ENCODE measurements at regions of chr16 and their contacts with region 1.

Region 1: DNA sequence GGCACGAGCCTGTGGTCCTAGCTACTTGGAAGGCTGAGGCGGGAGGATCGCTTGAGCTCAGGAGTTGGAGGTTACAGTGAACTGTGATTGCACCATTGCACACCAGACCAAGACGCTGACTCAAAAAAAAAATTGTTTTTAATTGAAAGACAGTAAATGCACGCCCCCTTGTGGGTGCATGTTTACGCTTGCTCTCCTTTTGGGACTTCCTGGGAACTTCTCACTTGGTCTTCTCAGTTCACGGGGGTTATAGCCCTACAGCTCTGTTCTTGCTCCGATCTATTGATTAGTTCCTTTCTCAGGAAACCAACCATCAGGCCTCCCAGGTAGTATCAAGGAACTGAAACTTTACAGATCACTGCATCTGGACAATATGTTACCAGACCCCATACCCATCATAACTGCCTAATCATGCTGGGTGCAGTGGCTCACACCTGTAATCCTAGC is 14.2 kb upstream of the RIPOR1 start:
- DNase-seq: peak; percentile 81 to 87
- ATAC-seq: peak in 3 of 4 donors; percentile 65 to 81 (median 74)
- H3K4me3 ChIP-seq: no peak overlapping the region
- H3K27ac ChIP-seq: no peak overlapping the region
- H3K4me1 ChIP-seq: no peaks in the 10 kb centered on the region
- H3K27me3 ChIP-seq: no peaks in the 10 kb centered on the region
- CTCF ChIP-seq: peak; percentile 63

Region 2: DNA sequence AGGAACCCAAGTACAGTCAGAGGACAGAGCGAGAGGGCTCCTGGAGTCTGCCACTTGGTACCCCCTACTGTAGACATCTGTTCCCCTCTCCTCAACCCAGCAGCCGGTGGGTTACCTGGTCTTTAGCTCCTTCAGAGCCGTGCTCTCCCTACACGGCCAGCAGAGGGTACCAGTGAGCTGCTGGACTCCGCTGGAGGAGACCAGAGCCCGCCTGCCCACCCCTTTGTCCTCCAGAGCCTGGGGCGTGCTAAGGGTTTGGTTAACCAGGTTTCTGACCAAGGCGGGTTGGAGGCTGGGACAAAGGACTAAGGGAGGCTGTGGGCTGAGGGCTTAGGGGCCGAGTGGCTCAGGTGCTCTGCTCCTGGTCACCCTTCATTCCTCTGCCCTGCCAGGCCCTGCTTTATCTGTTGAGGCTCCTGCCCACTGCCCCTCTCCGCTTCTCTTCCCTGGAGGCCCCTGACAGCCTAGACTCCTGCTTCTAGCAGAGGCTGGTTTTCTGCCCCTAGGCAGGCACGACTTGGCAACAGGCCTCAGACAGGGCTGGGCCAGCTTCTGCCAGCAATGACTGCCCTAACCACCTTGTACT is 86.2 kb before region 1 on chr16:
- intact Hi-C with region 1: loop called (anchors 2 to 5 kb)
- DNase-seq: peak; percentile 74 to 88
- ATAC-seq: peak; percentile 75 to 83 (median 80)
- H3K4me3 ChIP-seq: no peak overlapping the region
- H3K27ac ChIP-seq: no peak overlapping the region
- H3K4me1 ChIP-seq: peaks cover 6% of the 10 kb centered on the region
- H3K27me3 ChIP-seq: no peaks in the 10 kb centered on the region
- CTCF ChIP-seq: peak; percentile 89

Region 3: DNA sequence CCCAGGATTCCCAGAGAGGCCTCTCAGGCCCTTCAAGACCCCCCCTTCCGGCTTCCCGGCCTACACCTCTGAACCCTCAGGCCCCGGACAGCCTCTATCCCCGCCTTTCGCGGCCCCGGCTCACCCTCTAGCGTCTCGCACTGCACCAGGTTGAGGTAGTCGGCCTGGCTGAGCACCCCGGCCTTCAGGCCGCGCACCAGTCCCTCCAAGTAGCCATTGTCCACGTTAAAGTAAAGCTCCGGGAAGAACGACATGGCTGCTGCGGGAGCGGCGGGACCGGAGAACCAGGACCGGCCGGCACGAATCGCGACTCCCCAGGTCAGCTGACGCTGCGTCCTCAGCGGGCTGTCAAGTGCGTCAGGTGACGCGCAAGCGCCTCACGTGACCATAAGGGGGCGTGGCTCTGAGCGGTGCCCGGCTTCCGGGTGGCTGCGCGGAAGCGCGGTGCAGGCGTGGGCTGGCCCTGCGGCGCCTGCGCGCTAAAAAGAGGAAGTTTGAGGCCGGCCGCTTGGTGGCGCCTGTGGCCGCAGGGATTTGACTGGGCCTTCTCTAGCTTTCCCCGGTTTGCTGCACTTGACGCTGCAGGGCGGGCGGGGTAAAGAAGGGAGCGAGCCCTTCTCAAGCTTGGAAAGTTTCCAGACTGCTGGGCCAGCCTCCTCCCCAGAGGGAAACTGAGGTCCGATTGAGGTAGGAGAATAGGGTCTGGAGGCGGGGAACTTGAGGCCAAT is 33.4 kb before region 1 on chr16 and contains the start of gene ATP6V0D1:
- intact Hi-C with region 1: loop called in 1 of 2 experiments (anchors 5 kb)
- DNase-seq: peak; percentile 98 to 100
- ATAC-seq: peak; percentile 97 to 99 (median 98)
- H3K4me3 ChIP-seq: peak within 1 kb of the TSS; percentile 93
- H3K27ac ChIP-seq: peak within 1 kb of the TSS; percentile 93
- H3K4me1 ChIP-seq: peaks cover 24% of the 10 kb centered on the region
- H3K27me3 ChIP-seq: no peaks in the 10 kb centered on the region
- CTCF ChIP-seq: peak; percentile 89
- total RNA-seq, gene ATP6V0D1: 81.2 to 104 (median 87.3) TPM

Region 4: DNA sequence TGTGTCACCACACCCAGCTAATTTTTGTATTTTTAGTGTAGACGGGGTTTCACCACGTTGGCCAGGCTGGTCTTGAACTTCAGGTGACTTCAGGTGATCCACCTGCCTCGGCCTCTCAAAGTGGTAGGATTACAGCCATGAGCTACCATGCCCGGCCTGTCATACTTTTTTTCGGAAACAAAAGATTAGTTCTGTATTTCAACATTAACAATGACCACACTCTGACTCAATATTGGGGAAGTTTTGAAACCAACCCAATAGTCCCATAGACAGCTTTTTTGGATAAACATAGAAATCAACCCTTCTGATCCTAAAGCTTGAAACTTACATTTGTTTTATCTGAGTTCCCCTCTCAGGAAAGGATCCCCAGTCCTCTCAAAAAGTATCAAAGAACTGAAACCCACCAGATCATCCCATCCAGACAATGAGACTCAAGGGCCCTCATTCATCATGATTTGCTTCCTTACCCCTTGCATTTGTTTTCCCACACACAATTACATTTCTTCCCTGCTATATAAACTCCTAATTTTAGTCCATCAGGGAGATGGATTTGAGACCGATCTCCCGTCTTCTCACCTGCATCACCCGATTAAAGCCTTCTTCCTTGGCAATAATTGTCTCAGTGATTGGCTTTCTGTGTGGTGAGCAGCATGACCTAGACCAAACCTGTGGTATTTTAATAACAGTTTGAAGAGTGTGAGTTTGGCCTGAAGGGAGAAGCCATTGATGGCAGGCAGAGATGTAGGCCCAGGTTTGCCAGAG is 23.9 kb before region 1 on chr16:
- intact Hi-C with region 1: loop called in 1 of 2 experiments (anchors 2 kb)
- DNase-seq: no peak
- ATAC-seq: no peak
- H3K4me3 ChIP-seq: no peak overlapping the region
- H3K27ac ChIP-seq: no peak overlapping the region
- H3K4me1 ChIP-seq: no peaks in the 10 kb centered on the region
- H3K27me3 ChIP-seq: no peaks in the 10 kb centered on the region
- CTCF ChIP-seq: no peak